ENCODE measurements at regions of chr3 and their contacts with region 1.

Region 1: GRCh38 chr3:155805802-155806618 is at the start of gene C3orf33:
- DNase-seq: peak; percentile 39
- ATAC-seq: peak; percentile 99
- H3K4me3 ChIP-seq: peak within 1 kb of the TSS; percentile 67 to 86
- H3K27ac ChIP-seq: peak within 1 kb of the TSS; percentile 76
- H3K4me1 ChIP-seq: no peaks in the 10 kb centered on the region
- H3K27me3 ChIP-seq: no peaks in the 10 kb centered on the region; the same call in 1 of the 2 replicates
- CTCF ChIP-seq: peak; percentile 99
- total RNA-seq, gene C3orf33: 3.2 TPM

Region 2: DNA sequence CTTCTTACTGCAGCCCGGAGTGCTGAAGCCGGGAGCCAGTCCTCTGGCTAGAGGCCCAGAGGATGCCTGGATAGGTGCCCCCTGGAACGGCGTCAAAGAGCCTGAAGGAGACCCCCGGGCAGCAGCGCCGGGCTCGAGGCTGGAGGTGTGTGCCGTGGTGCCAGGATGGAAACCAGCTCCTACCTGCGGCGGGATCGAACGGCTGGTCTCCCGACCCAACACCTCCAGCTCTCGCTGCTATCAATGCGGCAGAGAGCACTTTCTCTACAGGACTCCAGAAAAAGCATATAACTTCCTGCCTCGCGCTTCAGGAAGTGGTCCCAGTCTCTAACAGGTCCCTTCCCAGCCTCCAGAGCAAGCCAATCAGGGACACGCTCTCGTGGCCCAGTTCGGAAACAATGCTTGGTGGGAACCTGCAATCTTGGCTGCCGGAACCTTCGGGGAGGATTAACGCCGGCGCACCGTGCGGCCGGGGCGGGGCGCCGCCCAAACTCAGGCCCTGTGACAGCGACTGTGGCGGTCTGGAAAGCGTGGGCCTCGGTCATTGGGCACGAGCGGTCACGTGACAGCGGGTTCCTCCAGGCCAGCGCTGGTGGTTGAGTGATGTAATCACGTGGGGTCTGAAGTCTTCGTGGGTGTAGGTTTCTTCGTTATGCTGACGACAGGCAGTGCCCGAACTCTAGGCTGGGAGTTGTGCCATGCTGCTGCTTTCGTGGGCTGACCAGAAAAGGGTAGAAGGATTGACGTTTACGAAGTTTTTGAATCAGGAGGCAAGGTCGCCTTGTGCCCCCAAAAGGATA is 48.3 kb after region 1 on chr3 and contains the start of gene SLC33A1:
- CTCF ChIA-PET with region 1: interaction called, 9 read pairs
- POLR2A ChIA-PET with region 1: no interaction called
- in situ Hi-C with region 1: no loop called
- intact Hi-C with region 1: loop called (anchors 5 kb)
- DNase-seq: peak; percentile 97
- ATAC-seq: peak; percentile 98
- H3K4me3 ChIP-seq: peak within 1 kb of the TSS; percentile 83 to 89
- H3K27ac ChIP-seq: peak within 1 kb of the TSS; percentile 98
- H3K4me1 ChIP-seq: 0 out of 2 replicates have a peak, but pooled peaks cover 8% of the 10 kb centered on the region
- H3K27me3 ChIP-seq: no peaks in the 10 kb centered on the region
- CTCF ChIP-seq: no peak
- total RNA-seq, gene SLC33A1: 27.2 TPM

Region 3: DNA sequence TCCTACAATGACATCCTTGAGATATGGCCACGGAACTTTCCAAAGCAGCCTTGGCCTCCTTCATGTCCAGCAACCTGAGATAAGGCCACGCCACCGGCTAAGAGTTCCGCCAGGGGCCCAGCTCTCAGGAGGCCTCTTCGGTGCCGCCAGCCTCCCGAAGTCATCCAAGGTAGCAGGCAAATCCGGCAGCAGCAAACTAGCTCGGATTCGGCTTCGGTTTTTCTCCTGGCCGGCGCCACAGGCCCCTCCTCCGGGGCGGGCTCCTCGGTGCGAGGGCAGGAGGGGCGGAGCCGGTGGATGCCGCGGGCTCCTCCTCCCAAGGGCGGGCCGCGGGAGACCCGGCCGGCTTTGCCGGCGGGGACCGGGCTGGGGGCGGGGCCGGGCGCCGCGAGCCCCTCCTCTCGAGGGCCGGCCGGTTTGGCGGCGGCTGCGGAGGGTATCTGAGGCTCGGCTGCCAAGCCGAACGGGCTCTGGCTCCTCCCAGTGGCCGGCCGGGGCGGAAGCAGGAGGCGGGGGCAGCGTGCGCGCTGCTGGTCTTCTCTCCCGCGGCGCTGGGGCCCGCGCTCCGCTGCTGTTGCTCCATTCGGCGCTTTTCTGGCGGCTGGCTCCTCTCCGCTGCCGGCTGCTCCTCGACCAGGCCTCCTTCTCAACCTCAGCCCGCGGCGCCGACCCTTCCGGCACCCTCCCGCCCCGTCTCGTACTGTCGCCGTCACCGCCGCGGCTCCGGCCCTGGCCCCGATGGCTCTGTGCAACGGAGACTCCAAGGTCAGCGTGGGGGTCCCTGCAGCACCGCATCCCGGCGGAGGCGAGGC is 64.3 kb after region 1 on chr3 and contains the start of gene GMPS:
- CTCF ChIA-PET with region 1: interaction called, 12 read pairs
- POLR2A ChIA-PET with region 1: no interaction called
- in situ Hi-C with region 1: no loop called
- intact Hi-C with region 1: no loop called
- DNase-seq: no peak
- ATAC-seq: peak; percentile 94
- H3K4me3 ChIP-seq: peak within 1 kb of the TSS; percentile 76 to 84
- H3K27ac ChIP-seq: peak within 1 kb of the TSS; percentile 94
- H3K4me1 ChIP-seq: peaks cover 17% of the 10 kb centered on the region
- H3K27me3 ChIP-seq: no peaks in the 10 kb centered on the region
- CTCF ChIP-seq: peak; percentile 79
- total RNA-seq, gene GMPS: 137 TPM

Region 4: DNA sequence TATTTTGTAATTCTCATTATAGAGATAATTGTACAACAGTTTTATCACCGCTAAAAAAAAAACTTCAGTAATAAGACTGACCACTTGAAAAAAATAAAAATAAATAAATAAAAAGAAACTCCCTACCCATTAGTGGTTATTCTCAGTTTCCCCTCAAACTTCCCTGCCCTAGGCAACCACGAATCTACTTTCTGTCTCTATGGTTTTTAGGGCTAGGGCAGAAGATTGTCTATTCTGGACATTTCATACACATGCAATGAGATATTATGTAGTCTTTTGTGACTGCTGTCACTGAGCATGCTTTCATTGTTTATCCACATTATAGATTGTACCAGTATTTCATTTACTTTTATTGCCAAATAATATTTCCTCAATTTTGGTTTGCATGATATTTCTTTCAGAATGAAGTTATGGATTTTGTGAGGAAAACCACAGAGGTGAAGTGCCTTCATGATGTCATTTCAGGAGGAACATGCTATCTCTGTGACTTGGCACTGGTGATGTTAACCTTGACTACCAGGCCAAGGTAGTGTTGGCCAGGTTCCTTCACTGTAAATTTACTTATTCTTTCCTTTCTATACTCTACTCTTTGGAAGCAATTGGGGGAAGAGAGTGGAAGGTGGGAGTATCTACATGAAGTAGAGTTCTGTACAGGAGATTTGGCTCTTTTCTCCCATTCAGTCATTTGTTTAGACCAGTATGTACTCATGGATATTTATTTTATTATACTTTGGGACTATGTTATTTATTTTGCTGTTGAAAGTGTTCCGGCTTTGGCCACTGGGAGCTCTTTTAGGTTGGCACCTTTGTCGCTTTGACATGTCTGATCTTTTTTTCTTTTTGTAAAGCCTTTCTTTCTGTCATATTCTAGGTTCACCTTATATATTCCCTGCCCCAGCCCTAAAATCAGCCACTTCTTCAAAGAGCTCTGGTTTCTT is 150.8 kb after region 1 on chr3:
- CTCF ChIA-PET with region 1: no interaction called
- POLR2A ChIA-PET with region 1: no interaction called
- in situ Hi-C with region 1: no loop called
- intact Hi-C with region 1: loop called (anchors 10 kb)
- DNase-seq: no peak
- ATAC-seq: no peak
- H3K4me3 ChIP-seq: no peak overlapping the region
- H3K27ac ChIP-seq: no peak overlapping the region
- H3K4me1 ChIP-seq: no peaks in the 10 kb centered on the region
- H3K27me3 ChIP-seq: no peaks in the 10 kb centered on the region
- CTCF ChIP-seq: no peak